Naive thymus-derived CD4-positive, alpha-beta T cell (primary cell): ENCODE measurements at regions of chr17 and their contacts with region 1.

Region 1: DNA sequence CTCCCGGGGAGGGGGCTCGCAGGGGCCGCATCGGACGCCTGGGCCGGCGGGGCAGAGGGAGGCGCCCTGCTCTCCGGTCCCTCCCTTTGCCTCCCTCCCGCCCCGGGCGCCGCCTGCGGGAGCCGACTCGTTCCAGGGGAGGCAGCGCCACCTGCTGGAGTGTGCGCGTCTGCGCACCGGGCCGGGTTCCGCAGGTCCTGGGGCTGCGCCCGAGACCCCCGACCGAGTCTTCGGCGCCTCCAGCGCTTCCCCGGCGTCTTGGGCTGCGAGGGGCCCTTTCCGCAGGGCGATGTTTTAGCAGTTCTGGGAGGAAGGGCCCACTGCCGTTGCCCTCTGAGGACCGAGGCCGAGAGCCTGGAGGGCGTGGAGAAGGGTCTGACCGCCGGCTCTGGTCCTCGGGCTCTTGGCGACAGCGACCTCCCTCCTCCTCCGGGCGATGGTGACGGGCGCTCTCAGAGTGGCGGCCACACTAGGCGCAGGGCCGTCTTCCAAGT is 106.3 kb downstream of the SEC14L1 start:
- DNase-seq: peak; percentile 62 to 93 (median 83)
- ATAC-seq: peak; percentile 99
- H3K4me3 ChIP-seq: peak overlapping the region; percentile 35
- H3K4me3 Mint-ChIP-seq: peak overlapping the region; percentile 29 to 81 (median 66)
- H3K27ac ChIP-seq: no peak overlapping the region
- H3K27ac Mint-ChIP-seq: peak overlapping the region in 1 of 9 donors; percentile 61
- H3K4me1 ChIP-seq: peaks cover 0 to 5% of the 10 kb centered on the region in 2 donors
- H3K4me1 Mint-ChIP-seq: peaks cover 3 to 22% (median 7%) of the 10 kb centered on the region in 7 donors
- H3K27me3 ChIP-seq: no peaks in the 10 kb centered on the region
- H3K27me3 Mint-ChIP-seq: peaks cover 9 to 24% (median 13%) of the 10 kb centered on the region in 5 donors

Region 2: DNA sequence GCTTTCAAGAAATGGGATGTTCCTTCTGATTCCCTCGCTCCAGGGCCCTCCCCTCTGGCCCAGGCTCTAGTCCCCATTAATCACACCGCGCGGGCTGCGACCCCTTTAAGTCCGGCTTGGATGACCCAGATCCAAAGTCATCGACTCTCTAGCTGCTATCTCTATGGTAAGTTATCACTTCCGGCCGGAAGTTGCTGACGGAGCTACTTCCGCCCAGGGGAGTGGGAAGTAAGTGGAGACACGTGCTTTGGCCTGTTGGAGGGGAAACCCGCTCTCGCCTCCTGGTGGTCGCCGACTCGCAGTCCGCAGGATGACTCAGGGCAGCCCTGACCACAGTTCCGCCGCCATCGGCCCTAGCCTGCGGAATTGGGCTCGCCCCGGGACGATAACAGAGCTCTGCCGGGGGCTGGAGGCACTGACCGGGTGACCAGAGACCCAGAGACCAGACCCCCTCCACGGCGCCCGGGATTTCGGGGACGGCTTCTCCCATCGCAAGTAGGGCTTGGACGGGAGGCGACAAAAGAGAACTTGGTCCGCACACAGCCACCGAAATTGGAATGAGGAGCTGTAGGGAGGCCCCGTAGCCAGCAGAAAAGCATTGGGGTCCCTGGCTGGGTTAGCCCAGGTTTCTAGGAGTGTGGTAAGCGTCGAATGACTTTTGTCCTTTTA is 158.5 kb before region 1 on chr17:
- CTCF ChIA-PET with region 1: interaction called, 9 read pairs
- POLR2A ChIA-PET with region 1: interaction called, 4 read pairs
- intact Hi-C with region 1: loop called (anchors 1 kb)
- DNase-seq: peak; percentile 61 to 86 (median 84)
- ATAC-seq: peak; percentile 96
- H3K4me3 ChIP-seq: peak overlapping the region; percentile 62
- H3K4me3 Mint-ChIP-seq: peak overlapping the region; percentile 89 to 100 (median 97)
- H3K27ac ChIP-seq: peak overlapping the region; percentile 89
- H3K27ac Mint-ChIP-seq: peak overlapping the region; percentile 91 to 100 (median 98)
- H3K4me1 ChIP-seq: peaks cover 23 to 31% of the 10 kb centered on the region in 2 donors
- H3K4me1 Mint-ChIP-seq: peaks cover 29 to 63% (median 51%) of the 10 kb centered on the region in 7 donors
- H3K27me3 ChIP-seq: no peaks in the 10 kb centered on the region
- H3K27me3 Mint-ChIP-seq: peaks cover 0 to 6% (median 0%) of the 10 kb centered on the region in 5 donors

Region 3: DNA sequence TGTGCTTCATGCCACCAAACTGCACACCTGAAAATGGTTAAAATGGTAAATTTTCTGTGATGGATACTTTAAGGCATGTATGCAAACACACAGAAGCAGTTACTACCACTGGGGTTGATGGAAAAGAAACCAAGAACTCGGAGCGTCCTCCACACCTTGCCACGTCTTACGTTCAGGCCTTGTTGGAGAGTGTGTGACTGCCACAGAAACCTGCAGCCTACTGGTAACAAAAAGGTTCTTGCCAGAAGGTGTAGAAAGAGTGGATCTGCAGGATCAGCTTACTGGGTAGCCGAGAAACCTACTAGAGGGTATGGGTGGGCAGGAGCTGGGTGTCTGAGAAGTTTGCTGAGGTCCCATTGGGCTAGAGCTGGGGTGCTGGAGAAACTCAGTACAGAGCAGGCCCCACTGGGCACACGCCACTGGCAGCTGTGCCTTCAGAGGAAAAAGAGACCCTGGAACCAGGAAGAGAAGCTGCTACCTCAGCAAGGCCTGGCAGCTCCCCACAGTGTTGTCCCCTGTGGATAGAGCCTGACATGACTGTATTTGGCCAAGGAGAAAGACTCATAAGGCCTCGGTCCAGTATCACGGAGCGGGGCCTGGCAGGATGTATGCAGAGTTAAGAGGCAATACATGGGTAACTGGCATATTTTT is 98.3 kb after region 1 on chr17:
- CTCF ChIA-PET with region 1: no interaction called
- POLR2A ChIA-PET with region 1: no interaction called
- intact Hi-C with region 1: no loop called
- DNase-seq: peak in 1 of 9 donors; percentile 13
- ATAC-seq: no peak
- H3K4me3 ChIP-seq: no peak overlapping the region
- H3K4me3 Mint-ChIP-seq: no peak overlapping the region
- H3K27ac ChIP-seq: no peak overlapping the region
- H3K27ac Mint-ChIP-seq: peak overlapping the region in 6 of 9 donors; percentile 7 to 74 (median 42)
- H3K4me1 ChIP-seq: peaks cover 27 to 39% of the 10 kb centered on the region in 2 donors
- H3K4me1 Mint-ChIP-seq: peaks cover 37 to 57% (median 51%) of the 10 kb centered on the region in 7 donors
- H3K27me3 ChIP-seq: no peaks in the 10 kb centered on the region
- H3K27me3 Mint-ChIP-seq: no peaks in the 10 kb centered on the region